Thyroid gland (tissue), 4 donors: ENCODE measurements at regions of chr2 and their contacts with region 1.

Region 1: DNA sequence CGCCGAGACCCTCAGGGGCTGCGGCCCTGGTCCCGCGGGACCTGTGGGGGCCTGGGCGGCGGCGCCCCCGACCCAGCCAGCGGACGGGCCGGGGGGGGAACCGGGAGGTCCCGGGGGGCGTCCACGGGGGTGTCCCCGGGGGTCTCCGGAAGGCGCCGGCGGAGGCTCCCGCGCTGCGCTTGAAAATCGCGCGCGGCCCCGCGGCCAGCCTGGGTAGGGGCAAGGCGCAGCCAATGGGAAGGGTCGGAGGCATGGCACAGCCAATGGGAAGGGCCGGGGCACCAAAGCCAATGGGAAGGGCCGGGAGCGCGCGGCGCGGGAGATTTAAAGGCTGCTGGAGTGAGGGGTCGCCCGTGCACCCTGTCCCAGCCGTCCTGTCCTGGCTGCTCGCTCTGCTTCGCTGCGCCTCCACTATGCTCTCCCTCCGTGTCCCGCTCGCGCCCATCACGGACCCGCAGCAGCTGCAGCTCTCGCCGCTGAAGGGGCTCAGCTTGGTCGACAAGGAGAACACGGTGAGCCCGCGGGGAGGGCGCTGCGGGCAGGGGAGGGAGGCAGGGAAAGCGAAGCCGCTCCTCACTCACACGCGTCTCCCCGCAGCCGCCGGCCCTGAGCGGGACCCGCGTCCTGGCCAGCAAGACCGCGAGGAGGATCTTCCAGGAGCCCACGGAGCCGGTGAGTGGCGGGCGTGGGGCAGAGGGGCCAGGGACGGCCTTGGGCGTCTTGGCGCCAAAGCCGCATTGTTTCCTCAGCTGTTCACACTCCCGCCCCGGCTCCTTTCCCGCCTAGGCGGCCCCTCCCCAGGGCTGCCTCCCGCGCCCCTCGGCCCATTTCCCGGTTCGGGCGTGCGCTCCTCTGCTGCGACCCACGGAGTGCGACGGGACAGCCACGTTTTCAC is at the start of gene RRM2:
- DNase-seq: peak; percentile 91 to 92
- H3K4me3 ChIP-seq: peak within 1 kb of the TSS in 1 of 3 donors; percentile 43
- H3K27ac ChIP-seq: no peak within 1 kb of the TSS
- H3K4me1 ChIP-seq: peaks cover 14 to 23% of the 10 kb centered on the region in 2 donors
- H3K27me3 ChIP-seq: peaks cover 7% of the 10 kb centered on the region
- CTCF ChIP-seq: no peak
- POLR2A ChIP-seq: no peak
- total RNA-seq, gene RRM2: 0.27 to 0.83 (median 0.75) TPM in 3 of 4 donors, not detected in the other

Region 2: GRCh38 chr2:9708683-9709538 is 413.7 kb before region 1 on chr2:
- intact Hi-C with region 1: no loop called
- DNase-seq: no peak
- H3K4me3 ChIP-seq: no peak overlapping the region
- H3K27ac ChIP-seq: no peak overlapping the region
- H3K4me1 ChIP-seq: no peaks in the 10 kb centered on the region
- H3K27me3 ChIP-seq: no peaks in the 10 kb centered on the region
- CTCF ChIP-seq: no peak
- POLR2A ChIP-seq: no peak

Region 3: GRCh38 chr2:10344105-10345066 is 221.8 kb after region 1 on chr2:
- intact Hi-C with region 1: no loop called
- DNase-seq: no peak
- H3K4me3 ChIP-seq: no peak overlapping the region
- H3K27ac ChIP-seq: no peak overlapping the region
- H3K4me1 ChIP-seq: peaks cover 0 to 15% of the 10 kb centered on the region in 2 donors
- H3K27me3 ChIP-seq: no peaks in the 10 kb centered on the region
- CTCF ChIP-seq: no peak
- POLR2A ChIP-seq: no peak

Region 4: DNA sequence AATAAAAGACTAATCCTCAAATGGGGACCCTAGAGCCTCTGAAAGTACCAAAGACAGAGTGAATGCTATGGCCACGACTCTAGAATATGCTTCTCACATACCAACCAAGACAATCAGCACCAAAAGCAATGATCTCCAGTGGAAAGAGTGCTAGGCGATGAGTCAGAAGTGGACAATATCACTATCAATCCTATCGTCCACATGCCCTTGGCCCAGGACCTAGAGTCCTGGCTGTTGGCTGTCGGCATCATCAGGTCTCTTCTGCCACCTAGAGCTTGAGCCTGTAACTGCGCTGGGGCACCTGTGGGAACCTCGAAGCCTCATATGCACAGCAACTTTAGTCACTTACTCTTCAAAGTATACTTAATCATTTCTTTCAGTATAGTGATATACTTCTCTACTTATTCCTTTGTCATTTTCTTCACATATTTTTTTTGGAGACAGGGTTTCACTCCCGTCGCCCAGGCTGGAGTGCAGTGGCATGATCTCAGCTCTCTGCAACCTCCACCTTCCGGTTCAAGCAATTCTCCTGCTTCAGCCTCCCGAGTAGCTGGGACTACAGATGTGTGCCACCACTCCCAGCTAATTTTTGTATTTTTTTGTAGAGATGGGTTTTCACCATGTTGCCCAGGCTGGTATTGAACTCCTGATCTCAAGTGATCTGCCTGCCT is 537.4 kb after region 1 on chr2:
- intact Hi-C with region 1: loop called (anchors 10 kb)
- DNase-seq: peak; percentile 62 to 65
- H3K4me3 ChIP-seq: no peak overlapping the region
- H3K27ac ChIP-seq: no peak overlapping the region
- H3K4me1 ChIP-seq: no peaks in the 10 kb centered on the region
- H3K27me3 ChIP-seq: no peaks in the 10 kb centered on the region
- CTCF ChIP-seq: peak; percentile 41 to 83 (median 73)
- POLR2A ChIP-seq: no peak